ENCODE measurements at regions of chr19 and their contacts with region 1.

Region 1: DNA sequence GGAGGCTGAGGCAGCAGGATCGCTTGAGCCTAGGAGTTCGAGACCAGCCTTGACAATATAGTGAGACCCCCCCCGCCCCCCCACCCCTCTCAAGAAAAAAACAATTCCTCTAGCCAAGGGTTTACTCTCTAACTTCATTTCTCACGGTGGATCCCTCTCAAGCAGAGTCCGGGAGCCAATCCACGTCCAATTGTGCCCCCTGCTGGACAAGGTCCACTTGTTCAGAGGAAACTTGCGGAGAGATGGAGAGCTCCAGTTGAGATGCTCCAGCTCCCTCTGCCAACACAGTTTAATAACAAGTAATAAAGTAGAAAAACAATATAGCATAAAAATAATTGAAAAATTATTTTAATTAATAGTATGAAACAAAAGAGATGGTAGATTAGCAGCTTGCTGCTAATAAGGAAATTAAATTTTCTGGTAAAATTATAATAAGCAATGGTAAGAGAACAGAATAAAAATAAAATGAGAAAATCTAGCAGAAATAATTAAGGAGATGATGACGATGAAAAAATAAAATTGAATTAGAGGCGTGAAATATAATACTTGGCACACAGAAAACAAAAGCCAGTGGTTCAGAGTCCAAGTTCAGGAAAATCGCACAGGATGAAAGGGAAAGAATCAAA is 14.5 kb upstream of the SIGLEC14 start:
- DNase-seq: peak; percentile 73
- ATAC-seq: peak; percentile 49
- H3K4me3 Mint-ChIP-seq: no peak overlapping the region
- H3K27ac Mint-ChIP-seq: no peak overlapping the region
- H3K4me1 Mint-ChIP-seq: peaks cover 5% of the 10 kb centered on the region
- H3K27me3 Mint-ChIP-seq: peaks cover 38% of the 10 kb centered on the region

Region 2: GRCh38 chr19:51422053-51422448 is 239.0 kb before region 1 on chr19:
- CTCF ChIA-PET with region 1: interaction called, 14 read pairs
- DNase-seq: peak; percentile 90
- ATAC-seq: peak; percentile 83
- H3K4me3 Mint-ChIP-seq: no peak overlapping the region
- H3K27ac Mint-ChIP-seq: no peak overlapping the region
- H3K4me1 Mint-ChIP-seq: peaks cover 17% of the 10 kb centered on the region
- H3K27me3 Mint-ChIP-seq: peaks cover 18% of the 10 kb centered on the region

Region 3: GRCh38 chr19:51467864-51468544 is 193.1 kb before region 1 on chr19:
- CTCF ChIA-PET with region 1: interaction called, 50 read pairs
- DNase-seq: no peak
- ATAC-seq: no peak
- H3K4me3 Mint-ChIP-seq: no peak overlapping the region
- H3K27ac Mint-ChIP-seq: no peak overlapping the region
- H3K4me1 Mint-ChIP-seq: peaks cover 36% of the 10 kb centered on the region
- H3K27me3 Mint-ChIP-seq: peaks cover 47% of the 10 kb centered on the region

Region 4: DNA sequence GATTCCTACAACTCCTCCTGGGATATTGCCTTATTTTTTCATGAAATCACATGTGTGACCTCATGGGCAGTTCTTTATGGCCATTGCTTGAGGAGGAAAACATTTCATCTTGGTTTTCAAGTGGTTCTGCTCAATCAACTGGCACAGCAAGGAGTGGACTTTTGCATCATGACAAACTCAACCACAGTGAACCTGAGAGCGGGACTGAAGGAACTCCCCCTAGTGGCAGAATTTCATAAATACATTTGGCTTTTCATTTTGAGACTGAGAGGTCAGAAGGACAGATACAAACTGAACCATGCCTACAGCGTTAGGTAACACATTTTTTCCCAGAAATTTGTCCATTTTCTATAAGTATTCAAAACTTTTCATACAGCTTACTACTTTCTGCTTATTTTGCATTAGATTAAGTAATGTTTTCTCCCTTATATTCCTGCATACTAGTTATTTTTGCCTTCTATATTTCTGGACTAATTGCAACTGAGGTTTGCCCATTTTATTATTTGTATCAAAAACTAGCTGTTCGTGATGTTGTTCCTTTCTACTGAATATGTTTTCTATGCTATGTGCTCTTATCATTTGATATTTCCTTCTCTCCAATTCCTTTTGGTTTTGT is 146.1 kb before region 1 on chr19:
- CTCF ChIA-PET with region 1: interaction called, 37 read pairs
- DNase-seq: peak; percentile 52
- ATAC-seq: peak; percentile 58
- H3K4me3 Mint-ChIP-seq: no peak overlapping the region
- H3K27ac Mint-ChIP-seq: no peak overlapping the region
- H3K4me1 Mint-ChIP-seq: peaks cover 9% of the 10 kb centered on the region
- H3K27me3 Mint-ChIP-seq: peaks cover 45% of the 10 kb centered on the region

Region 5: DNA sequence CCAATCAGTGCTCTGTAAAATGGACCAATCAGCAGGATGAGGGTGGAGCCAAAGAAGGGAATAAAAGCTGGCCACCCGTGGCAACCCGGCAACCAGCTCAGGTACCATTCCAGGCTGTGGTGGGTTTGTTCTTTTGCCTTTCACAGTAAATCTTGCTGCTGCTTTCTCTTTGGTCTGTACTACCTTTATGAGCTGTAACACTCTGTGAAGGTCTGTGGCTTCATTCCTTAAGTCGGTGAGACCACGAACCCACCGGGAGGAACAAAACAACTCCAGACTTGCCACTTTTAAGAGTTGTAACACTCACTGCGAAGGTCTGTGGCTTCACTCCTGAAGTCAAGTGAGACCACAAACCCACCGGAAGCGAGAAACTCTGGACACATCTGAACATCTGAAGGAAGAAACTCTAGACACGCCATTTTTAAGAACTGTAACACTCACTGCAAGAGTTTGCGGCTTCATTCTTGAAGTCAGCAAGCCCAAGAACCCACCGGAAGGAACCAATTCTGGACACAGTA is 15.5 kb after region 1 on chr19:
- CTCF ChIA-PET with region 1: interaction called, 24 read pairs
- DNase-seq: no peak
- ATAC-seq: peak; percentile 16
- H3K4me3 Mint-ChIP-seq: no peak overlapping the region
- H3K27ac Mint-ChIP-seq: peak overlapping the region; percentile 6
- H3K4me1 Mint-ChIP-seq: peaks cover 7% of the 10 kb centered on the region
- H3K27me3 Mint-ChIP-seq: peaks cover 10% of the 10 kb centered on the region

Measured in activated CD8-positive, alpha-beta memory T cell treated with anti-CD3 and anti-CD28 coated beads, Interleukin-2, amount 10 ng/mL, durations not matched to agents 7 days and 5 days (primary cell).